Posterior vena cava (tissue), 2 donors: ENCODE measurements at regions of chr13 and their contacts with region 1.

Region 1: GRCh38 chr13:59914556-59914955 is 249.2 kb downstream of the DIAPH3 start:
- DNase-seq: no peak

Region 2: GRCh38 chr13:58434943-58435342 is 1479.6 kb before region 1 on chr13:
- intact Hi-C with region 1: loop called in 1 of 2 experiments (anchors 5 kb)
- DNase-seq: no peak

Region 3: GRCh38 chr13:59950266-59950665 is 35.7 kb after region 1 on chr13:
- intact Hi-C with region 1: no loop called
- DNase-seq: no peak